ENCODE measurements at regions of chr7 and their contacts with region 1.

Region 1: GRCh38 chr7:23712368-23713284 is 2.6 kb downstream of the STK31 start:
- DNase-seq: peak; percentile 71
- CTCF ChIP-seq: peak; percentile 37

Region 2: DNA sequence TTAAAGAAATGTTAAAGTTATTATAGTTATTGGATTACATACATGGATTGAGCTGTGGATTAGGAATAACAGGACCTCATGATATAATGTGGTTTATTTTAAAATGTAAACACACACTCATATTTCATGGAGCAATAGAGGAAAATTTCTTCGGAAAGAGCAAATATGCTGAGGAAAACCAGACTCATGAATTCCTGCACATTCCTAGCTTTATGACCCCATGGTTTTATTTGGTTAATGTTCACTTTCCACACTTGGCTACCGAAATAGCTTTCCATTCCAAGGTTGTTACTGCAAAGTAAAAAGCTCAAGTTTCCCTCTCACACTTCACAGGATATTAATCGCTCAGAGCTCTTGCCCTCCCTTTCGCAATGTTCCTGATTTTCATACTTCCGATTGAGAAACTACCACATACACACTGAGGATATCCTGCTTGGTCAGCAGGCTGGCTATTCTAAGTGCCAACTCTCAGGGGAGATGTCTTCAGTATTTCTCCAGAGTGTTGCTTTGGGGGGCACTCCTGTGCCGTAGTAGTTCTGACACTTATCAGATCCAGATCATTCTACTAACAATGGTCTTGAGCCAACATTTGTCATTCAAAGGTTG is 1135.1 kb before region 1 on chr7:
- in situ Hi-C with region 1: no loop called
- DNase-seq: no peak
- CTCF ChIP-seq: no peak

Region 3: DNA sequence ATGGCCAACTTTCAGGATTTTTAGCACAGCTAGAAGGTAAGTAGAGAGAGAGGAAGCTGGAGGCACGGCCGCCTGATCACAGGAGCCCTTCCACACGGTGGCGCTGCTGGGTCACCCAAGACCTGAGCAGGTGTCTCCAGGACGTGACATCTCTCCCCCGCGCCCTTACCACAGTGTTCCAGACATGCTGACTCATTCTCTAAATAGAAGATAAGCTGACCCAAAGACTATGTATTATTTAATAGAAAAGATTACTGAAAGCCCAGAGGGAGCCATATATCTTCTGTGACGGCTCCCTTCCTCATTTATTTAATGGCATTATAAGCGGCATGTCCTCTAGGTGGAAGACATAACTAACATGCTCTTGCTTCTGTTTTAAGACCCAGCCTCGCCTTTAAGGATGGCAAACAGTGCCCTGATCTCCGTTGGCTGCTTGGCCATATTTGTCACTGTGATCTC is 439.5 kb before region 1 on chr7:
- in situ Hi-C with region 1: loop called (anchors 25 kb)
- DNase-seq: peak; percentile 77
- CTCF ChIP-seq: peak; percentile 94

Region 4: DNA sequence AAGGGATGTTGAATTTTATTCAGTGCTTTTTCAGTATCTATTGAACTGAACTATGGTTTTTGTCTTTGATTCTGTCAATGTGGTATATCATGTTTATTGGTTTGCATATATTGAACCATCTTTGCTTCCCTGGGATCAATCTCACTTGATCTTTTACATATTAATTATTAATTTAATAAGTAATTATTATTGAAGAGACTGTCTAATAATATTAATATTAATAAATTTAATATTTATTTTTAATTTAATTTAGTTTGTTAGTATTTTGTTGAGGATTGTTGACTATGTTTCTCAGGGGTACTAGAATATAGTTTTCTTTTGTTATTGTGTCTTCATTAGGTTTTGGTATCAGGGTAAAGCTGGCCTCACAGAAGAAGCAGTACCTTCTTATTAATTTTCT is 154.3 kb before region 1 on chr7:
- in situ Hi-C with region 1: loop called (anchors 5 kb)
- DNase-seq: no peak
- CTCF ChIP-seq: no peak

Measured in GM13977 (cell line).